ENCODE measurements at regions of chr1 and their contacts with region 1.

Region 1: DNA sequence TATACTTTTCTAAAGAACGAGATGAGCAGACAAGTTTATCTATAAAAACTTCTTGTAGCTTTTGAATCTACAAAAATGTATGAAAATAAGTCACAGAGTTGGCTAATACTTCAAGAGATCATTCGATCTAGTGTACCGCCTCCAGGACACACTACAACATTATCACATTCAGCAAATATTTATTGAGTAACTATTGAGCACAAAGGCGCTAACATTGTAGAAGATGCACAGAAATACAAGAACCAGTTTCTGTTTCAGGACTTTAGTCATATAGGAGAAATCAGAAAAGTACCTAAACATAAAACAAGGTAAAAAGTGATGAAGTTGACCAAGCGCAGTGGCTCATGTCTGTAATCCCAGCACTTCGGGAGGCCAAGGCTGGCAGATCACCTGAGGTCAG is 20.6 kb downstream of the WASF2 start:
- DNase-seq: no peak
- H3K4me3 ChIP-seq: no peak overlapping the region
- H3K27ac ChIP-seq: no peak overlapping the region
- H3K27me3 ChIP-seq: no peaks in the 10 kb centered on the region
- CTCF ChIP-seq: no peak

Region 2: DNA sequence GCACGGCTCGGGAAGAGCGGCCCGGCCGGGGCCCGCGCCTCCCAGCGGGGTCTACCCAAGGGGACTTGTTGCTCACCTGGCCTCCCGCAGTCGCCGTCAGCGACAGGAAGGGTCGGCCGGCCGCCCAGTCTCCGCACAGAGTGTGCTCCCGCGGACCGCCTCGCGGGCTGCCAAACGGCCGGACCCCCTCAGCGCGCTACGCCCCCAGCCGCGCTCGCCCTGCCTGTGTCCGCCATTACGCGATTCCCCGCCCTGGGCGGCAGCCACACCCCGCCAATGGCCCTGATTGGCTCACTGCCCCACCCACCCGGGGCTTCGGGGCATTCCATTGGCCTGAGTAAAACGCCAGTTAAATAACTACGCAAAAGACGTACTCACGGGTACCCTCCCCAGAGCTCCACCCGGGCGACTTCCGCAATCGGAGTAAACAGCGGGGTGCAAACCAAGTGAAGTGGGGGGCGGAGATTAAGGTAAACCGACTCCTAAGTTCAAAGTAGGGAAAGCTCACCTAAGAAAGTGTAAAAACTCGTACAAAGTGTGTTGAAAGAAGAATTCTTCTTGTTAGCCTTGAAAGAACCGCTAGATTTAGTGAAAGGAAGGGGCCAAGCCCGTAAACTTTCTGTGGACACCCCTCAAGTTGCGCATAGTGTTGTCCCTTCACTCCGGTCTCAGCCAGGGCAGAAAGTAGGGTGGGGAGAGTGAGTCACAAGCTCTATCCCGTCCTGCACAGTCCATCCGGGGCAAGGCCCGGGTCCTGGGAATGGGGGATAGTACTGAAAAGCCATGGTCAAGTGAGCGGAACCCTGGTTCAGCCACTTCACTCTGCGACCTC is 20.8 kb after region 1 on chr1 and contains the start of gene WASF2:
- CTCF ChIA-PET with region 1: no interaction called
- POLR2A ChIA-PET with region 1: interaction called, 10 read pairs
- DNase-seq: peak; percentile 92
- H3K4me3 ChIP-seq: peak within 1 kb of the TSS; percentile 75
- H3K27ac ChIP-seq: peak within 1 kb of the TSS; percentile 90
- H3K27me3 ChIP-seq: no peaks in the 10 kb centered on the region
- CTCF ChIP-seq: no peak
- polyA plus RNA-seq, gene WASF2: 54.8 and 62.7 TPM in 2 replicates

Region 3: GRCh38 chr1:27525296-27526272 is 56.2 kb after region 1 on chr1:
- CTCF ChIA-PET with region 1: no interaction called
- POLR2A ChIA-PET with region 1: interaction called, 10 read pairs
- DNase-seq: no peak
- H3K4me3 ChIP-seq: peak overlapping the region; percentile 21
- H3K27ac ChIP-seq: peak overlapping the region; percentile 11
- H3K27me3 ChIP-seq: no peaks in the 10 kb centered on the region
- CTCF ChIP-seq: no peak

Measured in AG04450 (cell line).